Cardiac septum (tissue), 1 donor: ENCODE measurements at regions of chr5 and their contacts with region 1.

Region 1: DNA sequence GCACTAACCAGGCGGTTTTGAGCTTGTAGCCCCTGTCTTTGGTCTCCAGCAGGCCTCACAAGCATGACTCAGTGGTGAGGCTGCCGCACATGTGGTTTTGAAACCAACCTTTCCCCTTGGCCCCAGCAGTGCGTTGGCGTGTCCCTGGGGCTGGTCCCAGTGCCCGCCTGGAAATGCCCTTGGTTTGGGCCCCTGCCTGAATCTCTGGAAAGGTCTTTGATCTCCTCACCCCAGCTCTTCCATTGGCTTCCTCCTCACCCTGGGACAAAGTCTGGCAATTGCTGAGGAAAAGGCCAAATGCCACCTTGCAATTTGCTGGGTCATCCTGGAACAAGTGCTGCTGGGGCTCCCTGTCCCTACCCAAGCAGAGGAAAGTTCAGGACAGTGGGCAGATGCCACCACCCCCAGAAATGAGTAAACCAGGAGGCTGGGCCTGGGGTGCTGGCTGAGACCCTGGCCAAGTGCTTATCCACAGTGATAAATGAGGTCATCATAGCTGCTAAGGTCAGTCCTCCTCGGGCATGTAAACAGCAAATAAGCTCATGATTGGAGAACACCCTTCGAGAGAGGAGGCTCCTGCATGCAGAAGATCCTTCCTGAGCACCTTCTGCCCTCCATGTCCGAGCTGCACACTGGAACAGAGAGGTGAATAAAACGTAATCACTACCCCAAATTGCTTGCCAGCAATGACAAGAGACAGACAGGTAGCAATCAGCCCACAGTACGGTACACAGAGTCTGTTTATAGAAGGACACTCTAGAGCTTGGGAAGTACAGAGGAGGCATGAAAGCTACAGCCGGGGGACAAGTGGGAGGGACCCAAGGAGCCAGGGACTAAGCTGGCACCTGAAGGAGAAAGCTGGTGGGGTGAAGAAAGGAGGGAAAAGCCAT is 98.9 kb upstream of the CPEB4 start:
- DNase-seq: no peak

Region 2: DNA sequence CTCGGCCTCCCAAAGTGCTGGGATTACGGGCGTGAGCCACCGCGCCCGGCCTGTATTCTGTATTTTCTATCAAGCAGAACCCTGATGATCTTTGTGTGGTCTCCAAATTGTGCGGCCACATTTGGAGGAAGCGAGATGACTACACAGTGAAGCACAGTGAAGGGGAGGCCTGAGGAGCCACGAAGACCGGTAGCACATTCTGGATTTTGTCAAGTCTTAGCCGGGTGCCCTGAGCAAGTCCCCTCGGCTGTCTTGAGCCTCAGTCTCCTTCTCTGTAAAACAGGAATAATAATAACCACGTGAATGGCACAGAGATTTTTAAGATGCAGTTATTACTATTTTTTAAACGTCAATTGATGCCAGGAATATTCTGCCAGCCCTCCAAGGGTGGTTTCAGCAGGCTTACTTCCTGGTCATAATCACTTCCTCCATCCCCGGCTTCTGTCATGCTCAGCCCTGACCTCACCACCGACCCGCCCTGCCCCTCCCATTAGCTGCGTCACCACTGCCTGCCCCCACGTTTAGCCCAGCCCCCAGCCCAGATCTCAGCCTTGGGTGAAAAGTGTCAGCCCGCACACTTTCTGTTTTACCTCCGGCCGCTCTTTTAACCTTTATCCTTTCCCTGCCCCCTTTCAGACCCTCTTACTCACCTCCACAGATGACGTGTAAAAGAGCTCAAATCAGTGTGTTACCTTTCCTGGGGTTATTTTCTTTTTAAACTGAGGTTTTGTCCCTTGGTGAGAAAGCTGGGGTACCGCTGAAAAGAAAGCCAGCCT is 982.2 kb before region 1 on chr5:
- intact Hi-C with region 1: no loop called
- DNase-seq: peak; percentile 97

Region 3: DNA sequence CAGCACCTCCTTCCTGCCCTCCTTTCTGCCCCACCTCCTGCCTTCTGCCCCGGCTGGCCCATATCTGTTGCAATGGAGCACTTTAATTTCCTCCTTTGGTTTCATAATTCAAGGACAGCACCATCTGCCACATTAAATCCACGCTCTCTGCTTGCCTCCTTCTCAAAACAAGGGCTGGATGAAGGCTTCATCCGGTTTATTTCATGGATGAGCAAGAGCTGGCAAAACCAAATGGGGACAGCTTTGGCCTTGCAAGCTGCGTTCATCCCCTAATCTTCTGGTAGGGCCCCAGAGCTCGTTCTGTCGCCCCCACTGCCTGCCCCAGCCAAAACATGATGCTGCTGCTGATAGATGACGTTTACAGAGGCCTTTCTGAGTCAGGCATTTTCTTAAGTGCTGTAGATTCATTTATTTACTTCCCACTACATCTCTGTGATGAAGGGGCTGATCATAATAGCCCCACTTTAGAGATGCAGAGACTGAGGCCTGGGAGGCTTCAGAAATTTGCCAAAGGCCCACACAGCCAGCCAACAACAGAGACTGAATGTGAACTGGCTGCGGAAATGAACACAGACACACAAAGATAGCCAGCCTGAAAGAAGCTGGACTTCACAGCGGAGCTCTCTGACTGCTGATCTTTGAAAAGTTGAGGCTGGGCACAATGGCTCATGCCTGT is 16.8 kb before region 1 on chr5:
- intact Hi-C with region 1: no loop called
- DNase-seq: no peak

Region 4: GRCh38 chr5:173829817-173830216 is 40.5 kb after region 1 on chr5:
- intact Hi-C with region 1: loop called (anchors 5 kb)
- DNase-seq: no peak